ENCODE measurements at regions of chr1 and their contacts with region 1.

Region 1: DNA sequence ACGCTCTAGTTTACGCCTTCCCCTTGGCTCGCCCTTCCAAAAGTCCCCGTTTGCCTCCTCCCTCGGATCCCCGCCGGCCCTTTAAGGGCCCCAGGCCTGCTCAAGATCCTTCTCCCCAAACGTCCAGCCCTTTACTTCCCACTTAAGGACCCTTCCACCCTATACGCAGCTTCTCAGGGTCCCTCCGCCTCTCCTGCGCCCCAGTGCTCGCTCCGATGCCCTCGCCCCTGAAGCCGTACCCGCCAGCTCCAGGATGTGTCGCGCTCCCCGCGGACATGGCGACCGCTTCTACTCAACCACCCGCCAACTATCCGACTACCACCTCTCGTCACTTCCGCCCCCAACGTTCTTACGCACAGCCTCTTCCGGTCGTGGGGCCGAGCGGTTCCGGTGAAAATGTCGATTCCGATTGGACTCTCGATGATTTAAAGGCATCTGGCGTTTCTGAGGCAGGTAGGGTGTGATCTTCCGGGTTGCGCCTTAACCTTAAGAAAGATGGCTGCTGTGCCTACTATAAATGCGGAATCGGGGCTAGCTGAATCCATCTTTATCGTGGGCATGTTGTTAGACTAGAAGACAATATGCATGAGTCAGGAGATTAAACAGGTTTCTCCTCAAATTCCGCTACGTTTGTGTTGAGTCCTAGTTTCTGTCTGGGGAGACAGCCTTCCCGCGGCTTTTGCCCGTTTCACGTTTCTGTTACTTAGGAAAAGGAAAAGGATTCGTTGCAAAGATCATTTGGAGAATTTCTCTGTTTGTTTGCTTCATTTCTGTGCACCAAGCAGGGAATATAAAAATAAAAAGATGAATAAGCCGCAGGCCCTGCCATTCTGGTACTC is at the start of gene KHDC4:
- DNase-seq: peak; percentile 99
- ATAC-seq: peak; percentile 90
- H3K4me3 ChIP-seq: peak within 1 kb of the TSS; percentile 78
- H3K27ac ChIP-seq: peak within 1 kb of the TSS; percentile 93
- H3K4me1 ChIP-seq: peaks cover 7% of the 10 kb centered on the region
- H3K27me3 ChIP-seq: no peaks in the 10 kb centered on the region
- CTCF ChIP-seq: 0 out of 2 replicates have a peak, but pooled peaks have one; percentile 11
- POLR2A ChIP-seq: peak; percentile 98
- RAD21 ChIP-seq: no peak; the same call in 1 of the 2 replicates
- total RNA-seq, gene KHDC4: 22.5 and 28.0 TPM in 2 replicates

Region 2: GRCh38 chr1:155847823-155848529 is 86.3 kb before region 1 on chr1:
- CTCF ChIA-PET with region 1: no interaction called
- POLR2A ChIA-PET with region 1: interaction called, 15 read pairs
- dilution Hi-C with region 1: no loop called
- in situ Hi-C with region 1: no loop called
- intact Hi-C with region 1: no loop called
- DNase-seq: no peak
- ATAC-seq: no peak
- H3K4me3 ChIP-seq: no peak overlapping the region
- H3K27ac ChIP-seq: no peak overlapping the region
- H3K4me1 ChIP-seq: peaks cover 2% of the 10 kb centered on the region; the same call in 1 of the 2 replicates
- H3K27me3 ChIP-seq: no peaks in the 10 kb centered on the region
- CTCF ChIP-seq: no peak
- POLR2A ChIP-seq: no peak
- RAD21 ChIP-seq: no peak

Region 3: GRCh38 chr1:156065212-156065611 is 130.9 kb after region 1 on chr1:
- CTCF ChIA-PET with region 1: interaction called, 7 read pairs
- POLR2A ChIA-PET with region 1: no interaction called
- dilution Hi-C with region 1: no loop called
- in situ Hi-C with region 1: loop called (anchors 5 kb)
- intact Hi-C with region 1: loop called (anchors 1 kb)
- DNase-seq: no peak
- ATAC-seq: no peak
- H3K4me3 ChIP-seq: no peak overlapping the region
- H3K27ac ChIP-seq: no peak overlapping the region
- H3K4me1 ChIP-seq: peaks cover 5% of the 10 kb centered on the region
- H3K27me3 ChIP-seq: no peaks in the 10 kb centered on the region
- CTCF ChIP-seq: no peak
- POLR2A ChIP-seq: no peak
- RAD21 ChIP-seq: no peak

Region 4: DNA sequence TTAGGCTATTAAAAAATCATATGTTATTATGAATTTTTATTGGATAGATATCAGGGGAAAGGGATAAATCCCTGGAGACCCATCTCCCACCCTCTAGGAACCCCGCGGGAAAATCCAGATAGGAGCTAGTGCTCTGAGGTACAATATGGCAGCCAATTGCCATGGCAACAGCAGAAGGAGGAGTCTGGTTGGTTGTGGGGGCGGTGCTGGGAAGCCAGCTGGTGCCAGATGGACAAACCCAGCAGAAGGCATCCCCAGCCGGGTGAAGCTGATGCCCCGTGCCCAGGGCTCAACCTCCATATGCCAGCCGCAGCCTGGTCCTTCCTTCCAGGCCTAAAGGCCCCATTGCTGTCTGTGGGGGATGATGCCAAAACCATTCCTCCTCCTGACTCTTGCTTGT is 473.0 kb after region 1 on chr1:
- CTCF ChIA-PET with region 1: no interaction called
- POLR2A ChIA-PET with region 1: no interaction called
- dilution Hi-C with region 1: no loop called
- in situ Hi-C with region 1: no loop called
- intact Hi-C with region 1: no loop called
- DNase-seq: no peak
- ATAC-seq: no peak
- H3K4me3 ChIP-seq: no peak overlapping the region
- H3K27ac ChIP-seq: no peak overlapping the region
- H3K4me1 ChIP-seq: no peaks in the 10 kb centered on the region
- H3K27me3 ChIP-seq: peaks cover 78% of the 10 kb centered on the region
- CTCF ChIP-seq: no peak
- POLR2A ChIP-seq: no peak
- RAD21 ChIP-seq: no peak